ENCODE measurements at regions of chr12 and their contacts with region 1.

Region 1: GRCh38 chr12:101773650-101774162 is 34.4 kb upstream of the SYCP3 start:
- DNase-seq: peak; percentile 41 to 88
- H3K4me3 ChIP-seq: no peak overlapping the region
- CTCF ChIP-seq: peak in 2 of 3 donors; percentile 14 to 68
- POLR2A ChIP-seq: no peak

Region 2: DNA sequence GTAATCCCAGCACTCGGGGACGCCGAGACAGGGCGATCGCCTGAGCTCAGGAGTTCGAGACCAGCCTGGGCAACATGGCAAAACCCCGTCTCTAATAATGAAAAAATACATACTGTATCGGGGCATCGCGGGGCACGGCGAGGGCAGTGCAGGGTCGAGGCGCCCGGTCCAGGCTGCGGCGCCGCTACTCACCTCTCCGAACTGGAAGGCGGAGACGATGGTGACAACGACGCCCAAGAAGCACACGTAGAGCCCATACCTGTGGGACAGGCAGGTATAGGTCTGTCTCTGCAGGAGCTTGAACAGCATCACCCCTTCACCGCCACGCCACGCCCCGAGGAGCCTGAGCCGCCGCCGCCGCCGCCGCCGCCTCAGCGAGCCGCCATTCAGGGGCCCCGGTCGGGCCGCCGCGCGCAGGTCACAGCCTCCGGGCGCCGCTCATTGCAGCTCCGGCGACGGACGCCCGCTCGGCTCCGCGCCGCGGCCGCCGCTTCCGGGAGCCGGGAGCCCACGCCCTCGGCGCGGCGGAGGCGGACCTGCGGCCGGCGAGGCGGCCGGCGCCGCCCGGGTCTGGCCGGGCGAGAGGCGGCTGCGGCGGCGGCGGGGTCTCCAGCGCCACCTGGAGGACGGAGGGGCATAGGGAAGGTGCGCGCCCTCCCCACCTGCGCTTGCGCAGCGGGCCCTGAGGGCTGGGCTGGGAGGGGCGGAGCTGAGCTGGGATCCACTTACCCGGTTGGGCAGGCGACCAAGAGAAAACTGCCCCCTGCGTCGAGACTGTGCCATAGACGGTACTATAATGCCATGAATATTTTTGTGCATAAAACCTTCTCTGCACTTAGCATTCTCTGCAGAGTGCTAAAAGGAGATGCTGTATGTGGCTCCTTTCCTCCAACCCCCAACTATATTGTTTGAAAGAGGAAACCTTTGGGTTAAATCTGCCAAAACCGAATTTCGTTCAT is 56.9 kb after region 1 on chr12 and contains the start of gene GNPTAB:
- intact Hi-C with region 1: loop called (anchors 5 kb)
- DNase-seq: peak; percentile 89 to 97
- H3K4me3 ChIP-seq: peak within 1 kb of the TSS; percentile 91
- CTCF ChIP-seq: no peak
- POLR2A ChIP-seq: no peak
- total RNA-seq, gene GNPTAB: 24.3 to 45.9 (median 32.6) TPM

Measured in lower leg skin (tissue), 4 donors.